ENCODE measurements at regions of chr16 and their contacts with region 1.

Region 1: GRCh38 chr16:4350787-4351659 is at the start of gene PAM16:
- DNase-seq: peak; percentile 93 to 99 (median 98)
- ATAC-seq: peak; percentile 89
- H3K4me3 ChIP-seq: peak within 1 kb of the TSS; percentile 92
- H3K4me3 Mint-ChIP-seq: peak within 1 kb of the TSS; percentile 93
- H3K27ac ChIP-seq: peak within 1 kb of the TSS; percentile 80 to 82
- H3K27ac Mint-ChIP-seq: peak within 1 kb of the TSS; percentile 90
- H3K4me1 ChIP-seq: peaks cover 16% of the 10 kb centered on the region
- H3K4me1 Mint-ChIP-seq: peaks cover 42% of the 10 kb centered on the region
- H3K27me3 ChIP-seq: no peaks in the 10 kb centered on the region
- H3K27me3 Mint-ChIP-seq: no peaks in the 10 kb centered on the region
- CTCF ChIP-seq: no peak
- total RNA-seq, gene PAM16: 30.9 to 31.4 TPM

Region 2: GRCh38 chr16:4371357-4372000 is 20.5 kb after region 1 on chr16 and contains the start of gene VASN:
- CTCF ChIA-PET with region 1: no interaction called
- POLR2A ChIA-PET with region 1: interaction called, 3 read pairs
- intact Hi-C with region 1: loop called in 1 of 2 experiments (anchors 1 kb)
- DNase-seq: peak; percentile 53 to 84 (median 75)
- ATAC-seq: peak; percentile 74
- H3K4me3 ChIP-seq: peak within 1 kb of the TSS; percentile 28 to 54
- H3K4me3 Mint-ChIP-seq: peak within 1 kb of the TSS; percentile 84
- H3K27ac ChIP-seq: no peak within 1 kb of the TSS
- H3K27ac Mint-ChIP-seq: peak within 1 kb of the TSS; percentile 32
- H3K4me1 ChIP-seq: peaks cover 19% of the 10 kb centered on the region
- H3K4me1 Mint-ChIP-seq: peaks cover 19% of the 10 kb centered on the region
- H3K27me3 ChIP-seq: no peaks in the 10 kb centered on the region
- H3K27me3 Mint-ChIP-seq: no peaks in the 10 kb centered on the region
- CTCF ChIP-seq: no peak
- total RNA-seq, gene VASN: 0.57 to 0.83 TPM

Region 3: GRCh38 chr16:4402439-4403132 is 51.6 kb after region 1 on chr16:
- CTCF ChIA-PET with region 1: interaction called, 10 read pairs
- POLR2A ChIA-PET with region 1: no interaction called
- intact Hi-C with region 1: no loop called
- DNase-seq: peak in 8 of 9 experiments; percentile 50 to 83 (median 68)
- ATAC-seq: peak; percentile 37
- H3K4me3 ChIP-seq: no peak overlapping the region
- H3K4me3 Mint-ChIP-seq: no peak overlapping the region
- H3K27ac ChIP-seq: no peak overlapping the region
- H3K27ac Mint-ChIP-seq: no peak overlapping the region
- H3K4me1 ChIP-seq: no peaks in the 10 kb centered on the region
- H3K4me1 Mint-ChIP-seq: peaks cover 19% of the 10 kb centered on the region
- H3K27me3 ChIP-seq: no peaks in the 10 kb centered on the region
- H3K27me3 Mint-ChIP-seq: no peaks in the 10 kb centered on the region
- CTCF ChIP-seq: peak; percentile 71

Region 4: GRCh38 chr16:4416200-4417032 is 65.4 kb after region 1 on chr16 and contains the start of gene CORO7:
- CTCF ChIA-PET with region 1: no interaction called
- POLR2A ChIA-PET with region 1: no interaction called
- intact Hi-C with region 1: loop called in 1 of 2 experiments (anchors 1 kb)
- DNase-seq: peak; percentile 98 to 100 (median 99)
- ATAC-seq: peak; percentile 78
- H3K4me3 ChIP-seq: peak within 1 kb of the TSS; percentile 51 to 60
- H3K4me3 Mint-ChIP-seq: peak within 1 kb of the TSS; percentile 97
- H3K27ac ChIP-seq: peak within 1 kb of the TSS; percentile 89 to 94
- H3K27ac Mint-ChIP-seq: peak within 1 kb of the TSS; percentile 99
- H3K4me1 ChIP-seq: peaks cover 44% of the 10 kb centered on the region
- H3K4me1 Mint-ChIP-seq: peaks cover 33% of the 10 kb centered on the region
- H3K27me3 ChIP-seq: no peaks in the 10 kb centered on the region
- H3K27me3 Mint-ChIP-seq: no peaks in the 10 kb centered on the region
- CTCF ChIP-seq: no peak
- total RNA-seq, gene CORO7: 950 to 991 TPM

Region 5: GRCh38 chr16:4425378-4426020 is 74.5 kb after region 1 on chr16 and contains the start of gene DNAJA3:
- CTCF ChIA-PET with region 1: no interaction called
- POLR2A ChIA-PET with region 1: no interaction called
- intact Hi-C with region 1: loop called in 1 of 2 experiments (anchors 2 kb)
- DNase-seq: peak; percentile 80 to 97 (median 92)
- ATAC-seq: peak; percentile 84
- H3K4me3 ChIP-seq: peak within 1 kb of the TSS; percentile 83 to 100
- H3K4me3 Mint-ChIP-seq: peak within 1 kb of the TSS; percentile 96
- H3K27ac ChIP-seq: peak within 1 kb of the TSS; percentile 96 to 100
- H3K27ac Mint-ChIP-seq: peak within 1 kb of the TSS; percentile 99
- H3K4me1 ChIP-seq: peaks cover 23% of the 10 kb centered on the region
- H3K4me1 Mint-ChIP-seq: peaks cover 32% of the 10 kb centered on the region
- H3K27me3 ChIP-seq: no peaks in the 10 kb centered on the region
- H3K27me3 Mint-ChIP-seq: no peaks in the 10 kb centered on the region
- CTCF ChIP-seq: no peak
- total RNA-seq, gene DNAJA3: 13.8 to 17.4 TPM

Measured in CD8-positive, alpha-beta T cell (primary cell).